HCT116 (cell line): ENCODE measurements at regions of chr5 and their contacts with region 1.

Region 1: GRCh38 chr5:45038366-45038987 is 229.7 kb downstream of the MRPS30 start:
- DNase-seq: peak; percentile 55
- ATAC-seq: peak; percentile 77
- H3K4me3 ChIP-seq: no peak overlapping the region
- H3K27ac ChIP-seq: no peak overlapping the region
- H3K4me1 ChIP-seq: peaks cover 0 to 5% of the 10 kb centered on the region in 2 experiments; a peak in 2 of 4 replicates
- H3K27me3 ChIP-seq: no peaks in the 10 kb centered on the region
- CTCF ChIP-seq: peak; percentile 55 to 79 (median 59); a peak in 5 of 6 replicates
- POLR2A ChIP-seq: peak; percentile 41
- RAD21 ChIP-seq: peak; percentile 76

Region 2: DNA sequence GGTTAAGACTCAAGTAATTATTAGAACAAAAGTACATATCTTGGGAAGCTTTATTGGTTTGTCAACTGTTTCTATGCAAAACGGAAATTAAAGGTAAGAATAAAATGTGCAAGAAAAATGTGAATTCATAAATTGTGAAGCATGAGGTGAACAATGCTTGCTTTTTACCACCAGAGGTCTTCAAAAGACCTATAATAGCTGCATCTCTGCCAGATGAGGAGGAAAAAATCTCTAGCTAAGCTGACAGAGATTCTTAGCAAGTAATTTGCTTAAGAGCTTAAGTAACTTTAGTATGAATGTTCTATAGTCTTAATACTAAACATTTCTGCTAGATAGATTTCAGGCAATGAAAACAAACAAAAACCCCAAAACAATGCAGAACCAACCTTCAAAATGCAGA is 175.7 kb before region 1 on chr5:
- CTCF ChIA-PET with region 1: interaction called, 7 read pairs
- POLR2A ChIA-PET with region 1: no interaction called
- RAD21 ChIA-PET with region 1: interaction called in 1 of 2 experiments, 4 read pairs
- intact Hi-C with region 1: loop called (anchors 5 kb)
- DNase-seq: peak; percentile 41
- ATAC-seq: peak; percentile 63; the same call in 1 of the 2 replicates
- H3K4me3 ChIP-seq: no peak overlapping the region
- H3K27ac ChIP-seq: no peak overlapping the region
- H3K4me1 ChIP-seq: no peaks in the 10 kb centered on the region
- H3K27me3 ChIP-seq: no peaks in the 10 kb centered on the region
- CTCF ChIP-seq: peak; percentile 52 to 65 (median 57); a peak in 5 of 6 replicates
- POLR2A ChIP-seq: no peak
- RAD21 ChIP-seq: peak; percentile 84

Region 3: GRCh38 chr5:45521067-45521466 is 482.6 kb after region 1 on chr5:
- CTCF ChIA-PET with region 1: interaction called, 28 read pairs
- POLR2A ChIA-PET with region 1: no interaction called
- RAD21 ChIA-PET with region 1: interaction called, 6 to 12 read pairs
- intact Hi-C with region 1: loop called (anchors 1 kb)
- DNase-seq: peak; percentile 62
- ATAC-seq: peak; percentile 94
- H3K4me3 ChIP-seq: no peak overlapping the region
- H3K27ac ChIP-seq: no peak overlapping the region; the same call in 1 of the 2 replicates
- H3K4me1 ChIP-seq: peaks cover 8 to 10% of the 10 kb centered on the region in 2 experiments; a peak in 3 of 4 replicates
- H3K27me3 ChIP-seq: no peaks in the 10 kb centered on the region
- CTCF ChIP-seq: peak; percentile 60 to 75 (median 66)
- POLR2A ChIP-seq: no peak
- RAD21 ChIP-seq: peak; percentile 88

Region 4: DNA sequence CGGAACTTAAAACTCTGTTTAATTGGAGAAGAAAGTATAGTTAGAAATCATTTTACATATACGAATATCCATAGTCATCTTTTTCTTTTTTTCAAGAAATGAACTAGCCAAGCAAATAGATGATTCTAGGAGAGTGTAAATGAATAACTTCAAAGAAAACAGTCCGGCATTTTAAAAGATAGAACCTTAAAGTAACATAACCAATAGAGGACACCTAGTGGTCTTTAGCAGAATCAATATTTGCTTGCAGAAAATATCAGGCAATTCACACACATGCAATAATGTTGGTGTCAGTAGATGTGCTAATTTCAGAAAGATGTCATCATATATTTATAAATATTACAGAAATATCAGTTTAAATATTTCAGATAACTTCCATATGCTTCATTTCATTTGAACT is 600.6 kb after region 1 on chr5:
- CTCF ChIA-PET with region 1: no interaction called
- POLR2A ChIA-PET with region 1: no interaction called
- RAD21 ChIA-PET with region 1: no interaction called
- intact Hi-C with region 1: loop called (anchors 1 kb)
- DNase-seq: peak; percentile 8
- ATAC-seq: no peak
- H3K4me3 ChIP-seq: no peak overlapping the region
- H3K27ac ChIP-seq: no peak overlapping the region
- H3K4me1 ChIP-seq: no peaks in the 10 kb centered on the region
- H3K27me3 ChIP-seq: no peaks in the 10 kb centered on the region
- CTCF ChIP-seq: peak; percentile 33 to 58 (median 42); a peak in 4 of 6 replicates
- POLR2A ChIP-seq: no peak
- RAD21 ChIP-seq: peak; percentile 48; the same call in 1 of the 2 replicates

Region 5: GRCh38 chr5:45774528-45774927 is 736.1 kb after region 1 on chr5:
- CTCF ChIA-PET with region 1: interaction called, 9 read pairs
- POLR2A ChIA-PET with region 1: no interaction called
- RAD21 ChIA-PET with region 1: no interaction called
- intact Hi-C with region 1: loop called (anchors 2 kb)
- DNase-seq: no peak
- ATAC-seq: no peak
- H3K4me3 ChIP-seq: no peak overlapping the region
- H3K27ac ChIP-seq: no peak overlapping the region
- H3K4me1 ChIP-seq: no peaks in the 10 kb centered on the region
- H3K27me3 ChIP-seq: no peaks in the 10 kb centered on the region
- CTCF ChIP-seq: peak; percentile 38 to 74 (median 49); a peak in 5 of 6 replicates
- POLR2A ChIP-seq: no peak
- RAD21 ChIP-seq: peak; percentile 64